IMR-90 (cell line): ENCODE measurements at regions of chr16 and their contacts with region 1.

Region 1: DNA sequence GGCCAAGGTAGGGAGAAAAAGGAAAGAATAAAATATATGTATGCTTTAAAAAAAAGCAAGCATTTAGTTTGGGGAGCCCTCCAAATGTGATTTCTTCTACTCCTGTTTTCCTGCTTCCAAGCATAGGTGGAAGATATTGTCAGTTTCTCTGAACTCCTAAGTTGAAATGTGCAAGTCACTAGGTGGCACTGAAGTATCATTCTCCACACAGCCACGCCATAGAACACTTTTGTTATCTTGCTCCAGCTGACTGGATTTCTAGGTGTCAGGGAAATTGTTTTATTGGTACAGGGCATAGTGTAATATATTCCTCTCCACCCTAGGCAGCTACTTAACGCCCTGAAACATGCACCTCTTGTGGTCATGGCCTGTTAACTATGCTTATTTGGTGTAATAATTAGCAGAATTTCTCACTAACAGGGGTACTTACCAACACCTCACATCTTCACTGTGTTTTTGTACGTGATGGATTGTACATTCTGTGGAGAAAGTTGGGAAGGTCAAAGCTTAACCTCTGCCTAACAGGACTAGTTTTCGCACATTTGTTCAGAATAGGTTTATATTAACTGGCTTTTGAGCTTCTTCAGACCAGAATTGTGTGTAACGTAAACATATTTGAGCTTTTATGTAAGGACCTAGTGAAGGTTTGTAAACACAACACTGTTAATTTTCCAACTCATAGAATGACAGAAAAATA is 69.3 kb downstream of the FTO start:
- DNase-seq: peak; percentile 79
- ATAC-seq: peak; percentile 46
- H3K4me3 ChIP-seq: no peak overlapping the region
- H3K27ac ChIP-seq: no peak overlapping the region
- H3K4me1 ChIP-seq: peaks cover 22% of the 10 kb centered on the region
- H3K27me3 ChIP-seq: no peaks in the 10 kb centered on the region
- CTCF ChIP-seq: peak; percentile 86
- POLR2A ChIP-seq: no peak
- RAD21 ChIP-seq: peak; percentile 92

Region 2: GRCh38 chr16:53549970-53550690 is 223.2 kb before region 1 on chr16:
- CTCF ChIA-PET with region 1: interaction called, 3 read pairs
- POLR2A ChIA-PET with region 1: no interaction called
- dilution Hi-C with region 1: no loop called
- in situ Hi-C with region 1: no loop called
- intact Hi-C with region 1: loop called (anchors 1 kb)
- DNase-seq: peak; percentile 82
- ATAC-seq: peak; percentile 95
- H3K4me3 ChIP-seq: no peak overlapping the region
- H3K27ac ChIP-seq: no peak overlapping the region
- H3K4me1 ChIP-seq: no peaks in the 10 kb centered on the region; the same call in 1 of the 2 replicates
- H3K27me3 ChIP-seq: peaks cover 46% of the 10 kb centered on the region
- CTCF ChIP-seq: peak; percentile 92
- POLR2A ChIP-seq: 0 out of 2 replicates have a peak, but pooled peaks have one; percentile 33
- RAD21 ChIP-seq: peak; percentile 92

Region 3: DNA sequence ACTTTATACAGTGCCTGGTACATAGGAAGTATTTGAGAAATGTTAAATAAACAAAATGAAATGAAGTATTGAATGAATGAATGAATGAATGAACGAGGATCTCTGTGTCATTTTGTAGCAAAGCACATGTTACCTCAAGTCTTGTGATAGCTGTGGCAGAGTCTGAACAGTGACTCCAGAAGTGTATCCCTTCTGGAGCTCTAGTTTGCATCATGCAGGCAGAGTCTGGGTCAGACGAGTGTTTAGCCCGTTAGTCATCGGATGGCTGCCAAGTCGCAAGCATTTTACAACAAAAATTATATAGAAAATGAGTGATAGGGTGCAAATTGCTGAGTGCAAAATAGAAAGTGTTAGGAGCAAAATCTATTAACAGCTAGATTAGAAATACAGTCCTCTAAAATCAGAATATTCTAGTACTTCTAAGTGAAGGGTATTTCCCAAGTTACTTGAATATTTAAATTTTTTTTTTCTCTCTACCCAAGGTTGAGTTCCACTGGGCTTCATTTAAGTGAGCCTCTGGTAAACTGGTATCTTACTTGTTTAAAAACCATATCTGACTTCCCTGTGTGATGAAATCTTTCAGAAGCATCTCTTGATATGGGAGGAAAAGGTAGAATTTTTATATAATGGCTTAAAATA is 43.9 kb after region 1 on chr16:
- CTCF ChIA-PET with region 1: interaction called, 4 read pairs
- POLR2A ChIA-PET with region 1: no interaction called
- dilution Hi-C with region 1: no loop called
- in situ Hi-C with region 1: no loop called
- intact Hi-C with region 1: loop called (anchors 5 kb)
- DNase-seq: peak; percentile 96
- ATAC-seq: peak; percentile 82
- H3K4me3 ChIP-seq: no peak overlapping the region
- H3K27ac ChIP-seq: peak overlapping the region; percentile 27; the same call in 1 of the 2 replicates
- H3K4me1 ChIP-seq: peaks cover 12% of the 10 kb centered on the region
- H3K27me3 ChIP-seq: no peaks in the 10 kb centered on the region
- CTCF ChIP-seq: no peak
- POLR2A ChIP-seq: no peak
- RAD21 ChIP-seq: no peak

Region 4: GRCh38 chr16:54080524-54081008 is 307.3 kb after region 1 on chr16:
- CTCF ChIA-PET with region 1: no interaction called
- POLR2A ChIA-PET with region 1: no interaction called
- dilution Hi-C with region 1: no loop called
- in situ Hi-C with region 1: no loop called
- intact Hi-C with region 1: loop called (anchors 10 kb)
- DNase-seq: peak; percentile 98
- ATAC-seq: peak; percentile 94
- H3K4me3 ChIP-seq: no peak overlapping the region
- H3K27ac ChIP-seq: peak overlapping the region; percentile 57; the same call in 1 of the 2 replicates
- H3K4me1 ChIP-seq: peaks cover 7% of the 10 kb centered on the region; the same call in 1 of the 2 replicates
- H3K27me3 ChIP-seq: no peaks in the 10 kb centered on the region
- CTCF ChIP-seq: no peak
- POLR2A ChIP-seq: no peak
- RAD21 ChIP-seq: no peak

Region 5: DNA sequence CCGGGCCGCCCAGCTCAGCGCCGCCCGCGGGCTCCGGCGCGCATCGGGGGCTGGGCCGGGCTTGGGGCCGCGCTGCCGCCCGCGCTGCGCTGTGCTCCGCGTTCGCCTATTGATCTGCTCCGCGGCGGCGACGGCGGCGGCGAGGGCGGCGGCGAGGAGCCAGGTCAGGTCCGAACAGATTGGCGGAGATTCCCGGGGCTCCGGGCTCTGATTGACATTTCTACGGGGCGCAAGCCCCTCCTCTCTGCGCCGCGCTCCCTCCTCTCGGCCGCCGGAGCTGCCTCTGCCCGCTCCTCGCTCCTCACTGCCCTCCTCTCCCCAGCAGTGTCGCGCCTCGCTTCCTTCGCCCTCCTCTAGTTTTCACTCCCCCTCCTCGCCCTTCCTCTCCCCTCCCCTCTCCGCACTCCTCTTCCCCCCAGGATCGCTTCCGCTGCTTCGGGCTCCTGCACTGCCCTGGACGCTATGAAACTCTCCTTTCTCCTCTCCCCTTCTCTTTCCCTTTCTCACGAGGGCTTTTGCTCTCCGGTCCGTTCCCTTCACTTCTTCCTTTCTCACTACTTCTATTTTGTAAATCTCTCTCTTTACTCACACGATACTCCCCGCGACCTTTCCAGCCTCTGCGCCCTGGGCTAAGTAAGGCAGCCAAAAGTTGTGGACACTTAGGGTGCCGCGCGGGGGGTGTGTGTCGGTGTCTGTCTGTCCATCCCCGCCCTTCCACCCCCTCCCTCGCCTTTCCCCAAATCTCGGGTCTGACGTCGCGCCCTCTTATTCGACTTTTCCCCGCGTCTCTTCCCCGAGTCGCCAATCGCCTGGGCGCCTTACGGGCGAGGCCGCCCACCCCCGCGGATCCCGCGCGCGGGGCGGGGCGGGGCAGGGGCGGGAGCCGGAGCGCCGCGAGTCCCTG is 513.0 kb after region 1 on chr16 and contains the start of gene IRX3:
- CTCF ChIA-PET with region 1: no interaction called
- POLR2A ChIA-PET with region 1: interaction called, 3 read pairs
- dilution Hi-C with region 1: no loop called
- in situ Hi-C with region 1: loop called (anchors 25 kb)
- intact Hi-C with region 1: loop called (anchors 10 kb)
- DNase-seq: peak; percentile 4
- ATAC-seq: peak; percentile 58
- H3K4me3 ChIP-seq: peak within 1 kb of the TSS; percentile 71
- H3K27ac ChIP-seq: no peak within 1 kb of the TSS; the same call in 1 of the 2 replicates
- H3K4me1 ChIP-seq: peaks cover 4% of the 10 kb centered on the region; the same call in 1 of the 2 replicates
- H3K27me3 ChIP-seq: peaks cover 97% of the 10 kb centered on the region
- CTCF ChIP-seq: no peak
- POLR2A ChIP-seq: no peak
- RAD21 ChIP-seq: no peak
- total RNA-seq, gene IRX3: not detected in 2 replicates

Region 6: GRCh38 chr16:54929090-54930004 is 1156.0 kb after region 1 on chr16:
- CTCF ChIA-PET with region 1: interaction called, 3 read pairs
- POLR2A ChIA-PET with region 1: no interaction called
- dilution Hi-C with region 1: no loop called
- in situ Hi-C with region 1: loop called (anchors 25 kb)
- intact Hi-C with region 1: loop called (anchors 5 kb)
- DNase-seq: peak; percentile 94
- ATAC-seq: peak; percentile 91
- H3K4me3 ChIP-seq: peak overlapping the region; percentile 53
- H3K27ac ChIP-seq: no peak overlapping the region
- H3K4me1 ChIP-seq: no peaks in the 10 kb centered on the region
- H3K27me3 ChIP-seq: peaks cover 38% of the 10 kb centered on the region
- CTCF ChIP-seq: no peak
- POLR2A ChIP-seq: no peak
- RAD21 ChIP-seq: no peak

Region 7: DNA sequence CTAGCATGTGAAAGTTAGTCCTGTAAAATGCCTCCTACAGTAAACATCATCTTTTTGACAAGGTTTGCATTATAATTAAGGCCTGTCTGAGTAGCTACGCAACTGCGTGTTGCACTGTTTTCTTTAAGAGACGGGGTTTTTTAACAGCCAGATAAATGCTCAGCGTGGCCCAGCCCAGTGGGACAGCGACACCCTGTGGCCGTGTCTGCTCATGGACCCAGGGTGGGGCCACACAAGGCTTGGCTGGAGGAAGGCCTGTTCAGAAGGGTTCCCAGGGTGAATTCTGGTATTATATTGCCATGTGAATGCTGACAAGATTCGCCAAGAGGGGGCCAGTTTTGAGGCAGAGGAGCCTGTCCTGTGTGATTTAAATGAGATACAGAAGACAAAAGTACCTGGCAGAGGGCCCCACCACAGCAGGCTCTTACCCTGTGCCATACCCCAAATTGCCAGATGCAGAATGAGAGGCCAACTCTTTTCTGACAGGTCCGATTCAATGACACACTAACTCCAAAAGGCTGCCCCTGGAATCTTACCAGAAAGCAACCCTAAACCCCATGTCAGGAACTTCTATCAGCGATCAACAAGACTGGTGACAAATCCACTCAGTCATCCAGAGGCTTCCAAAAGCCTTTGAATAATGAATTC is 1484.8 kb after region 1 on chr16:
- CTCF ChIA-PET with region 1: no interaction called
- POLR2A ChIA-PET with region 1: no interaction called
- dilution Hi-C with region 1: no loop called
- in situ Hi-C with region 1: no loop called
- intact Hi-C with region 1: loop called (anchors 5 kb)
- DNase-seq: peak; percentile 26
- ATAC-seq: no peak
- H3K4me3 ChIP-seq: no peak overlapping the region
- H3K27ac ChIP-seq: no peak overlapping the region
- H3K4me1 ChIP-seq: no peaks in the 10 kb centered on the region
- H3K27me3 ChIP-seq: no peaks in the 10 kb centered on the region
- CTCF ChIP-seq: peak; percentile 58
- POLR2A ChIP-seq: no peak
- RAD21 ChIP-seq: peak; percentile 76